ENCODE measurements at regions of chr9 and their contacts with region 1.

Region 1: DNA sequence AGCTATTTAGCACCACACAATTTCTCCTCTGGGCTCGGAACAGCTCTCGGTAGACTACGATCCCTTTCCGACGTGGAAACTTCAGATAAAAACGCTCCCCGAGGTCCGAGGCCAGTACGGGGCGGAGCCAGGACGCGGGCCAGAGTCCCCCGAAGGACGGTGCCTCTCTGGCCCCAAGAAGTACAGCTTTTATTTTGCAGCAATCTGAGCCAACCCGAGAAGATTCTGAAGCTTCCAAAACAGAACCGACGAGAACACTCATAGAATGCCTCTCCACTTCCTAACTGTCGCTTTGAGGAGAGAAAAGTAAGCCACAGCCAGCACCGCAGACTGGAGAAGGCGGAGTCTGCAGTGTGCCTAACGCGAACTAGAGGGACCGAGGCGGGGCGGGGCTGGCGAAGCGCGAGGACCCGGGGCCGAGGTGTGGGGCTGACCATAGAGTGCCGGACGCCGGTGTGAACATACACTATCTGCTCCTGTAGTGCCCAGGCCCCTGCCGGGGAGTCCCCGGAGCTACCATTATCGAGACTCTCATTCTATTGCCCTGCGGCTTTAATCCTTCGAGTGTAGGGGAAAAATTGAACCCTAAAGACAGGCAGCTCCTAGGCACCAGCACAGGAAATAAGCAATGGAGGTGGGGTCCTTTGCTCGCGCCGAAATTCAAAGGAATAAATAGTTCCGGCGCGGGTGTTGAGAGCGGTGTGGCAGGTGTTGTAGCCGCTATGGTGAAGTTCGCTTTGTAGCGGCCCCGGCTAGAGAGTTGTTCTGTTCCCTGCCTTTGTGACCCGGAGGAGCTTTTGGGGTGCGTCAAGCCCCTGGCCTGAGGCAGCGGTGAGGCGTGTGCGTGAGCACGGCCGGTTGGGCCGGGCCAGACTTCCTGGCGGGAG is at the start of gene SMC2:
- DNase-seq: peak; percentile 94
- H3K4me3 Mint-ChIP-seq: peak within 1 kb of the TSS; percentile 99
- H3K27ac Mint-ChIP-seq: peak within 1 kb of the TSS; percentile 99
- H3K4me1 Mint-ChIP-seq: peaks cover 48% of the 10 kb centered on the region
- H3K27me3 Mint-ChIP-seq: no peaks in the 10 kb centered on the region
- total RNA-seq, gene SMC2: 55.2 to 57.2 TPM

Region 2: GRCh38 chr9:104104360-104104759 is 10.5 kb after region 1 on chr9:
- CTCF ChIA-PET with region 1: interaction called, 7 read pairs
- POLR2A ChIA-PET with region 1: interaction called, 11 read pairs
- DNase-seq: no peak
- H3K4me3 Mint-ChIP-seq: no peak overlapping the region
- H3K27ac Mint-ChIP-seq: no peak overlapping the region
- H3K4me1 Mint-ChIP-seq: peaks cover under 1% of the 10 kb centered on the region
- H3K27me3 Mint-ChIP-seq: no peaks in the 10 kb centered on the region

Region 3: DNA sequence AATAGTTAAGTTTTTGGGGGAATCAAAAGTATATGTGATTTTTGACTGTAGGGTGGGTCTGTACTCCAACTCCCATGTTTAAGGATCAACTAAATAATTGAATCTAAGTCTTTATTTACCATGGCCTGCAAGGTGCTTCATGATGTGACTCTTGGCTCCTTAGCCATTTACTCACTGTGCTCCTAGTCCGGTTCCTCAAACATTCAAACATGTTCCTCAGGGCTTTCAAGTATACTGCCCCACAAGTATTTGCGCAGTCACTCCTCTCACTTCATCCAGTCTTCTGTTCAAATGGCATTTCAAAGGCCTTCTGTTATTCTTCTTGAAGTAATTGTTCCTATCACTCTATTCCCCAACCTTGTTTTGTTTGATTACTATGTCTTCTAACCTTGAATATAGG is 16.6 kb after region 1 on chr9:
- CTCF ChIA-PET with region 1: interaction called, 7 read pairs
- POLR2A ChIA-PET with region 1: interaction called, 20 read pairs
- DNase-seq: no peak
- H3K4me3 Mint-ChIP-seq: no peak overlapping the region
- H3K27ac Mint-ChIP-seq: no peak overlapping the region
- H3K4me1 Mint-ChIP-seq: no peaks in the 10 kb centered on the region
- H3K27me3 Mint-ChIP-seq: no peaks in the 10 kb centered on the region

Region 4: DNA sequence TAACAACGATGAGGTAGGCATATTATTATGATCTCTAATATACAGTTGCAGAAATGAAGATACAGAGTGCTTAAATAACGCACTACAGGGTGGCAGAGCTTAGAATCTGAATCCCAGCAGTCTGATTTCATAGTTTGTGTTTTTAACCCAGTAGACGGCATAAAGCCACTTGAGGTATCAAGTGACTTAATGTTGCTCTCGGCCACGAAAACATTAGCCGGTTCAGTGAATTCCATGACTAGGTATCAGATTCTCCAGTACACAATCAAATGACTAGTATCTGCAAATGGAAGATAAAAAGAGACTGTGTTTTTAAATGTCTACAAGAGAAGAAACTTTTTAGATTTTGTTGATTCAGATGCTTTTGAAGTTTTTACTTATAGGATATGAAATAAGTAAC is 25.0 kb after region 1 on chr9:
- CTCF ChIA-PET with region 1: no interaction called
- POLR2A ChIA-PET with region 1: interaction called, 20 read pairs
- DNase-seq: no peak
- H3K4me3 Mint-ChIP-seq: no peak overlapping the region
- H3K27ac Mint-ChIP-seq: no peak overlapping the region
- H3K4me1 Mint-ChIP-seq: no peaks in the 10 kb centered on the region
- H3K27me3 Mint-ChIP-seq: no peaks in the 10 kb centered on the region

Region 5: DNA sequence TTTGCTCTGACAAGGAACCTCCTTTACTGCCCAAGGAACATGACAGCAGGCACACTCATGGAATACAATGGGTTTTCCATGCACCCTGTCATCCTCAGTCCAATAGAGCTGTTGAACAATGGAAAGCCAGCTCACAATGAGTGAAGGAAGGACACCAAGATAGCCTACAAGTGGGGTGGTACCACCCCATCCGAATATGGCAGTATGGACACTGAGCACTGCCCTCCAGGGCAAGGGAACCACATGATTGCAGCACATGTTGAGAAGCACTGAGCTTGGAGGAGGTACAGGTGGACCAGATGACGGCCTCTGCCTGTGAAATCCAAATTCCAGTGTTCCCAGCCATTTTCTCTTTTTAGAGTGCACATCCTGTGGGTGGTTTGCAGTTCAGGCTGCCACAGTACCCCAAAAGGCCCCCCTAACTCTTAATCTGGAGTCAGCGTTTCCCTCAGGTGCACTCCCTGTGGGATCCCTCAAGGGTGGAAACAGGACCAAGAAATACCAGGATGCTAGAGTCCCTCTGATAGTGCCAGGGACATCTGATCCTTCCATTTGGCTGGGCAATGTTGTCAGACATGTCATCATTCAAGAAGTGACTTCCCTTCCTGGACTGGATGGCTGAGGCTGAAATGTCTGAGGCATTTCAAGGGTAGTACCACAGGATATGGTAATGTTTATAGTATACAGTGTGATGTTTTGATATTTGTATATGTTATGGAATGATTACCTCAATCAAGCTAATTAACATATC is 49.1 kb after region 1 on chr9:
- CTCF ChIA-PET with region 1: no interaction called
- POLR2A ChIA-PET with region 1: interaction called, 11 read pairs
- DNase-seq: no peak
- H3K4me3 Mint-ChIP-seq: no peak overlapping the region
- H3K27ac Mint-ChIP-seq: peak overlapping the region; percentile 57
- H3K4me1 Mint-ChIP-seq: peaks cover 19% of the 10 kb centered on the region
- H3K27me3 Mint-ChIP-seq: no peaks in the 10 kb centered on the region

Region 6: DNA sequence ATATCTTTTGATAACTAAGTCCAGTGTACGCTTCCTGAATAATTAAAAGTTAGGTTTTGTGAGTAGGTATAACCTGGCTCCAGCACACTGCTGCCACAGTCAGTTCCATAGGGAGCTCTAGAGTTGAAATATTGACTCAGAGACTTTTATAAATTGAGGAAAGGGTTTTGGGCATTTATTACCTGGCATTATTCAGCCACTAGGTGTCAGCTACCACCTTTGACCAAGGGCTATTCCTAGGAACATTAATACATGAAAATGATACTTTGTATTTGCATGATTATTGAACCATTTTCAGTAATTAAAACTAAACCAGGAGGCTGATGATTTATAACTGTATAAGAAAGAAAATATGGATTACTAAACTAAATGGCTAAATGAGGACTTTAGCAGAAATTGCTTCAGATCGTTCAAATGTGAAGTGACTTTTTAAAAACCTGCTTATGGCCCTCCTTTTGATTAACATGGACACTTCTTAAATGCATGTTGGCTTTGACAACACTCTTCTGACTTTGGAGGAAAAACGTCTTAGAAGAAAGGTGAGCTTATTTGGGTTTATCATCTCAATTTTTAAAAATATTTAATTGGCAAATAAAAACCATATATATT is 83.2 kb after region 1 on chr9:
- CTCF ChIA-PET with region 1: no interaction called
- POLR2A ChIA-PET with region 1: no interaction called
- DNase-seq: no peak
- H3K4me3 Mint-ChIP-seq: no peak overlapping the region
- H3K27ac Mint-ChIP-seq: no peak overlapping the region
- H3K4me1 Mint-ChIP-seq: no peaks in the 10 kb centered on the region
- H3K27me3 Mint-ChIP-seq: no peaks in the 10 kb centered on the region

Region 7: DNA sequence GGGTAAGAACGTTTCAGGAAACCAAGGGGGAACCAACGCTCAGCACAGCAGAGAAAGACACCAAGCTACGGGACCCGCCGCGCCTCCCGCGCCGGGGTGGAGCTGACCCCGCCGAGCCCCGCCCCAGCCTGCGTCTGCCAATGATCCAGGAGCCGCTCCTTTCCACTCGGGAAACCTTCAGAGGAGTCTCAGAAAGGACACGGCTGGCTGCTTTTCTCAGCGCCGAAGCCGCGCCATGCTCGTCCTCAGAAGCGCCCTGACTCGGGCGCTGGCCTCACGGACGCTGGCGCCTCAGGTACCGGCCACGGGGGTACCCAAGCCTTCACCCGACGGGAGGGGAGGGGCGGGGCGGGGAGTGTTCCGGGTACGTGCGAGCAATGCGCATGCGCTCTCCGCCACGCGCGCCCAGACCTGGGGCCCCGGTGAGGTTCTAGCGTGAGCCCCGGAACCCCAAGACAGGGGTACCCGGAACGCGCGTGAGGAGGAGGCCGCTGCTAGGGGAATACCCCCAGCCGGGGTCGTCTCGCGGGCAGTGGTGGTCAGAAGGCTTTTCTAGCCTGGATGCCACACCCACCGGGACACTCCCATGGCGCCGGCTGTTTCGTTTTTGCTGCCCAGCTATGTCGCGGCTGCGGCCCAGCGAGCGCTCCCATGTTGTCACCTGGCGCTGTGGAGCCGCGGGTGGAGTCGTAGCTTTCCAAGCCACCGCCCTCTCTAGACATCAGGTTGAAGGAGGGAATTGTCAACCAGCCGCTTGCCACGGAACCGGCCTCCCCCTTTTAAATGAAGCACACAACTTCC is 653.9 kb after region 1 on chr9 and contains the start of gene NIPSNAP3A:
- CTCF ChIA-PET with region 1: interaction called, 3 read pairs
- POLR2A ChIA-PET with region 1: interaction called, 32 read pairs
- DNase-seq: peak; percentile 88
- H3K4me3 Mint-ChIP-seq: peak within 1 kb of the TSS; percentile 98
- H3K27ac Mint-ChIP-seq: peak within 1 kb of the TSS; percentile 98
- H3K4me1 Mint-ChIP-seq: peaks cover 28% of the 10 kb centered on the region
- H3K27me3 Mint-ChIP-seq: peaks cover 2% of the 10 kb centered on the region
- total RNA-seq, gene NIPSNAP3A: 14.0 to 17.1 TPM

Region 8: GRCh38 chr9:105244003-105244733 is 1150.3 kb after region 1 on chr9 and contains the start of gene SLC44A1:
- CTCF ChIA-PET with region 1: no interaction called
- POLR2A ChIA-PET with region 1: interaction called, 10 read pairs
- DNase-seq: peak; percentile 95
- H3K4me3 Mint-ChIP-seq: peak within 1 kb of the TSS; percentile 80
- H3K27ac Mint-ChIP-seq: peak within 1 kb of the TSS; percentile 63
- H3K4me1 Mint-ChIP-seq: peaks cover 18% of the 10 kb centered on the region
- H3K27me3 Mint-ChIP-seq: peaks cover 63% of the 10 kb centered on the region
- total RNA-seq, gene SLC44A1: 9.5 to 10.2 TPM